ENCODE measurements at regions of chr11 and their contacts with region 1.

Region 1: GRCh38 chr11:1382831-1383607 is 6.7 kb upstream of the BRSK2 start:
- DNase-seq: peak; percentile 94
- H3K4me3 ChIP-seq: peak overlapping the region; percentile 36 to 59 (median 46)
- H3K27ac ChIP-seq: peak overlapping the region; percentile 56 to 86 (median 72)
- H3K4me1 ChIP-seq: peaks cover 0 to 9% (median 8%) of the 10 kb centered on the region in 4 donors
- H3K27me3 ChIP-seq: no peaks in the 10 kb centered on the region
- CTCF ChIP-seq: no peak
- EP300 ChIP-seq: no peak
- POLR2A ChIP-seq: no peak

Region 2: GRCh38 chr11:1262172-1263006 is 120.6 kb before region 1 on chr11:
- intact Hi-C with region 1: loop called (anchors 2 kb)
- DNase-seq: peak; percentile 97
- H3K4me3 ChIP-seq: peak overlapping the region; percentile 30 to 50 (median 46)
- H3K27ac ChIP-seq: peak overlapping the region; percentile 65 to 74 (median 72)
- H3K4me1 ChIP-seq: peaks cover 0 to 17% (median 15%) of the 10 kb centered on the region in 4 donors
- H3K27me3 ChIP-seq: no peaks in the 10 kb centered on the region
- CTCF ChIP-seq: no peak
- EP300 ChIP-seq: no peak
- POLR2A ChIP-seq: peak in 1 of 2 donors; percentile 65

Region 3: DNA sequence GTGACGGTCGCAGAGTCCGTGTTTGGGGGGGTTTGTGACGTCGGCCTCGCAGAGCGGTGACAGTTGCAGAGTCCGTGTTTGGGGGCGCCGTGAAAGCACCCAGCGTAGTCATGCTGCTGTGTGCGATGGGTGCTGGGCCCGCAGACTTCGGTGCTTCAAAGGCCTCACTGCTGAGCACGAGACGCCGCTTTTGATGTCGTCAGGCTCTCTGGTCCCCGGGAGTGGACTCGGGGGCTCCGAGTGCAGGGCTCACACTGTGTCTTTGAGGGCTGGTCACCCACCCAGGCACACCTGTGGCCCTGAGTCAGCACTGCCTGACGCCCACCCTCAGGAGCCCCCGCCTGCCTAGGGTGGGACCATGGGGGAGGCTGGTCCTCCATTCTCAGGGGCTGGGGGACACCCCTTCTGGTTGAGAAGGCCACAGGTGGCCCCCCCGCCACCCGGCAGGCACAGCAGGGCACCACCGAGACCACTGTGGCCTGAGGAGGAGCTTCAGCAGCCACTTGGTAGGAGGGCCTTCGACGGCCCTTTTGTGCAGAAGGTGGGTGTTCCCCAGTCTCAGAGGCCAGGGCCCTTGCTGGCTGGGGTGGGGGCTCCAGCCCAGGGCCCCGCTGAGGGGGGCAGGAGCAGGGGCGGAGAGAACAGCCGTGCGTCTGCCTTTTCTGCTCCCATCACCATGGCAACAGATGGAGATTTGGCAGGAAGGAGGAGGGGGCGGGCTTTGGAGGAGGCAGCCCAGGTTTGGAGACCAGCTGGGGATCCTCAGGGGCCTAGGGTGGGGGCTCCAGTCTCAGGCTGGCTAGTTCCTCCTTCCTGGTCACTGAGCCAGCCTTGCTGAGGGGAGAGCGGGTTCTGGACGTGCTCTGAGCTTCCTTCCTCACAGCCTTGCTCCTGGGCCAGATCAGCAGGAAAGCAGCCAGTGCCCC is 27.6 kb after region 1 on chr11:
- intact Hi-C with region 1: no loop called
- DNase-seq: no peak
- H3K4me3 ChIP-seq: no peak overlapping the region
- H3K27ac ChIP-seq: no peak overlapping the region
- H3K4me1 ChIP-seq: no peaks in the 10 kb centered on the region
- H3K27me3 ChIP-seq: peaks cover 0 to 15% (median 15%) of the 10 kb centered on the region in 3 donors
- CTCF ChIP-seq: no peak
- EP300 ChIP-seq: no peak
- POLR2A ChIP-seq: no peak